Activated T-helper 1 cell treated with anti-CD3 and anti-CD28 coated beads, Interleukin-12 subunit alpha, Interleukin-12 subunit beta, Interleukin-2, Interleukin-4 antibody, amounts not matched to agents 30 ng/mL and 10 ng/mL and 1 ng/mL, durations not matched to agents 14 hours and 24 hours and 36 hours (primary cell): ENCODE measurements at regions of chr12 and their contacts with region 1.

Region 1: DNA sequence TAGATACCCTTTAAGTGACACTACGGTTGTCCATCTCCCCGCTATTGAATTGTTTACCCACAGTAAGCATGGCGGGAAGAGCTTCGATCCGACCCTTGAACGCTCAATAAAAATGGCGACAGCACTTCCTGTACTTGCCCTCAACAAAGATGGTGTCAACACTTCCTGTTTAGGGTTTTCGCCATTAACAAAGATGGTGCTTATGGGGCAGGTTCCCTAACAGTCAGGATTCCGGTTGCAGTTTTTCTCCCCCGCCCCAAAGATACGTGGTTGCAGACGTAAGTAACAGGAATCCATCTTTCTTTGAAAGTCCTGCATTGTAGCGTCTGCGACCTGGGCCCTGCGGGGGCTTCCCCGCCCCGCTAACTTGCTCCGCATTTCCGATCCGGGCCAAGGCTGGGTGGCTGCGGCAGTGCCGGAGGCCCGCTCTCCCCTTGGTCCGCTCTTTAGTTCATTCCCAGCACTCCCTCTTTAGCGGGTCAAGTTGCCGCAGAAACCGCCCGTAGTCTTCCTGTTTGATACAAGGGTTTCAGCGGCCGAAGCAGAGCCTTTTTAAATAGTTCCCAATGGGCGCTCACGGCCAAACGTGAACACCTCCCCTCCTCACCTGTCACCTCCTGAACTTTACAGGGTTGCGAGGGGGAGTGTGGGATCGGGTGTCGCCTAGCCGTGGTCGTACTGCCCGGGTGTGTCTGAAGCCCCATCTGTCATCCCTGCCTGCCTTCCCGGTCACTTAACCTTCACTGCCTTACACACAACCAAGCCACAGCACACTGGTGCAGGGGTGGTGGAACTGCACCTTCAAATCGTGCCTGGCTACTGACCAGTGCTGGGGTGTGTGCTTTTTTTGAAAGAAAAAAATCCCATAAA is at the start of gene CRADD:
- DNase-seq: peak; percentile 86
- H3K4me3 Mint-ChIP-seq: peak within 1 kb of the TSS; percentile 85
- H3K27ac Mint-ChIP-seq: peak within 1 kb of the TSS; percentile 96
- H3K4me1 Mint-ChIP-seq: peaks cover 38% of the 10 kb centered on the region
- H3K27me3 Mint-ChIP-seq: no peaks in the 10 kb centered on the region
- total RNA-seq, gene CRADD: 11.2 and 12.3 TPM in 2 replicates

Region 2: GRCh38 chr12:91866566-91866965 is 1810.9 kb before region 1 on chr12:
- intact Hi-C with region 1: loop called (anchors 5 kb)
- DNase-seq: no peak
- H3K4me3 Mint-ChIP-seq: no peak overlapping the region
- H3K27ac Mint-ChIP-seq: no peak overlapping the region
- H3K4me1 Mint-ChIP-seq: peaks cover 16% of the 10 kb centered on the region
- H3K27me3 Mint-ChIP-seq: no peaks in the 10 kb centered on the region

Region 3: GRCh38 chr12:93336291-93336741 is 341.1 kb before region 1 on chr12:
- intact Hi-C with region 1: no loop called
- DNase-seq: no peak
- H3K4me3 Mint-ChIP-seq: no peak overlapping the region
- H3K27ac Mint-ChIP-seq: no peak overlapping the region
- H3K4me1 Mint-ChIP-seq: no peaks in the 10 kb centered on the region
- H3K27me3 Mint-ChIP-seq: peaks cover 1% of the 10 kb centered on the region

Region 4: DNA sequence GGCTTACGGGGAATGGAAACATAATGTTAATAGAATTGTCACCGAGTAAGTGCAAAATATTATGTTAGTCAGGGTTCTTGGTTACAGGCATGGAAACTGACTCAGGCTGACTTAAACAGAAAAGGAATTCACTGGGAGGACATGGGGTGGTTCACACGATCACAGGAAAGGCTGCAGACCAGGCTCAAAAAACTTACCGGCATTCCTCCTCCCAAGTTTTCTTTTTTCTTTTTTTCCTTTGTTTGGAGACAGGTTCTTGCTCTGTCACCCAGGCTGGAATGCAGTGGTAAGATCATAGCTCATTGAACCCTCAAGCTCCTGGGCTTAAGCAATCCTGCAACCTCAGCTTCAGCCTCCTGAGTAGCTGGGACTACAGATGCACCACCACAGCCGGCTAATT is 223.8 kb before region 1 on chr12:
- intact Hi-C with region 1: no loop called
- DNase-seq: no peak
- H3K4me3 Mint-ChIP-seq: no peak overlapping the region
- H3K27ac Mint-ChIP-seq: no peak overlapping the region
- H3K4me1 Mint-ChIP-seq: peaks cover 10% of the 10 kb centered on the region
- H3K27me3 Mint-ChIP-seq: peaks cover 13% of the 10 kb centered on the region

Region 5: GRCh38 chr12:93467351-93468007 is 210.0 kb before region 1 on chr12 and contains the start of gene MRPL42:
- intact Hi-C with region 1: loop called (anchors 1 kb)
- DNase-seq: peak; percentile 90
- H3K4me3 Mint-ChIP-seq: peak within 1 kb of the TSS; percentile 96
- H3K27ac Mint-ChIP-seq: peak within 1 kb of the TSS; percentile 93
- H3K4me1 Mint-ChIP-seq: peaks cover 43% of the 10 kb centered on the region
- H3K27me3 Mint-ChIP-seq: no peaks in the 10 kb centered on the region
- total RNA-seq, gene MRPL42: 83.2 and 87.0 TPM in 2 replicates

Region 6: DNA sequence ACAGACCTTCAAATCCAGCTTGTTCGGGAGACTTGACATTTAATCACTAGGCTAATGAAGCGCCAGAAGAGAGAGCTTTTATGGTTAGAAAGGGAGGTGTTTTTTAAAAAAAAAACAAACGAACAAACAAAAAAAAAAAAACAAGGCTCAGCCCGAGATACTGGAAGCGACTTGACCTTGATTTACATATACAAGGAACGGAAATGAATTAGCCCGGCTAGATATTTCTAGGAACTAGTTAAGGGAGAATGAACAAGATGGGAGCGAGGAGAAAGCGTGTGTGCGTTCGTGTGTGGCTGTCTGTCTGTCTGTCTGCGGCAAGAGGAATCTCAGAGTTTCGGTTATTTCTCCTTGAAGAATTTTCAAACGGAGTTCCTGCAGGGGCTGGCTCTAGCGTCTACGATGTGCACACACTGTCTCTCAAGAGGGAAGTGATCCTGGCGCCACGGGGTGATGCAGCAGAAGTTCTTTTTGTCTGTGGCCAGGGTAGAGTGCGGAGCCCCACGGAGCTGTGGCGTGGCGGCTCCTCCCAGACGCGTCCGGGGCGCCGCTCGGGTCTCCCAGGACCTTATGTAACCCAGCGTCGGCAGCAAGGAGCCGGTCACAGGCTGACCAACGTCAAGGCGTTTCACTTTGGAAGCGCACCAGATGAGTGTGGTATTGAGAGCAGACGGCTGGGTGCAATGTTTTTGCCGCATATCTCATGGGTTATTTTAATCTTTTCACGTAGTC is 86.1 kb before region 1 on chr12:
- intact Hi-C with region 1: loop called (anchors 1 kb)
- DNase-seq: no peak
- H3K4me3 Mint-ChIP-seq: peak overlapping the region; percentile 96
- H3K27ac Mint-ChIP-seq: peak overlapping the region; percentile 74
- H3K4me1 Mint-ChIP-seq: peaks cover 55% of the 10 kb centered on the region
- H3K27me3 Mint-ChIP-seq: peaks cover 34% of the 10 kb centered on the region

Region 7: DNA sequence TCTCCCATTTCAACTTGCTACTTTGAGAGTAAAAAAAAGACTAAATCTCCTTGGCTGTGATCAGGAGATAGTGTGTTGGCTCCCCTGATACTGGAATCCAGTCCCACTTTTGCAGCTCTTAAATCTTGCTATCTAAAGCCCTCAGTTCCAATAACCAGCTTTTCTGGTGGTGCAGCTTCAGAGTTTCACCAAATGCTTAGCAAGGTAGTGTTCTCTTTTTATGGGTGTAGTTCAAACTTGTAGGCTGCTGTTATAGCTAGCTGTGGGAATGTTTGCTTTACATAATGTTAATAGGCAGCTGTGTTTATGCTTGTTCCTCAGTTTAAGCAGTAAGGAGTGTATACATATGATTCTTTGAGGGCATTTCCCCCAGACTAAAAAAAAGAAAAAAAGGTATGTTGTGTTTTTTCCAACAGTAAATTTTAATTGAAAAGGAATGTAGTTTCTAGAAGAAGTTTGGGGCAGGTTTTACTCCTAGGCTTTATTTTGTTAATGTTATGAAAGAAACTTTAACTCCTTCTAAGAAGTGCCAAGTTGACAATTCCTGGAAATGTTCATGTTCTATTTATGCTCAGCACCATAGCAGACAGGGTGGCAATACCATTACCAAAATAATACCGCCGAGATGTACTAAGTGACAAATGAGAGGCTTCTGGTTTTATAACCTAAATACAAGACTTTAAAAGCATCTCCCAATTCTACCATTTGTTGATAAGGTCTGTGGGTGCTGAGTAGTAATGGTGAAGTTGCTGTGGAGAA is 11.8 kb after region 1 on chr12:
- intact Hi-C with region 1: no loop called
- DNase-seq: no peak
- H3K4me3 Mint-ChIP-seq: no peak overlapping the region
- H3K27ac Mint-ChIP-seq: no peak overlapping the region
- H3K4me1 Mint-ChIP-seq: peaks cover 26% of the 10 kb centered on the region
- H3K27me3 Mint-ChIP-seq: peaks cover 2% of the 10 kb centered on the region

Region 8: DNA sequence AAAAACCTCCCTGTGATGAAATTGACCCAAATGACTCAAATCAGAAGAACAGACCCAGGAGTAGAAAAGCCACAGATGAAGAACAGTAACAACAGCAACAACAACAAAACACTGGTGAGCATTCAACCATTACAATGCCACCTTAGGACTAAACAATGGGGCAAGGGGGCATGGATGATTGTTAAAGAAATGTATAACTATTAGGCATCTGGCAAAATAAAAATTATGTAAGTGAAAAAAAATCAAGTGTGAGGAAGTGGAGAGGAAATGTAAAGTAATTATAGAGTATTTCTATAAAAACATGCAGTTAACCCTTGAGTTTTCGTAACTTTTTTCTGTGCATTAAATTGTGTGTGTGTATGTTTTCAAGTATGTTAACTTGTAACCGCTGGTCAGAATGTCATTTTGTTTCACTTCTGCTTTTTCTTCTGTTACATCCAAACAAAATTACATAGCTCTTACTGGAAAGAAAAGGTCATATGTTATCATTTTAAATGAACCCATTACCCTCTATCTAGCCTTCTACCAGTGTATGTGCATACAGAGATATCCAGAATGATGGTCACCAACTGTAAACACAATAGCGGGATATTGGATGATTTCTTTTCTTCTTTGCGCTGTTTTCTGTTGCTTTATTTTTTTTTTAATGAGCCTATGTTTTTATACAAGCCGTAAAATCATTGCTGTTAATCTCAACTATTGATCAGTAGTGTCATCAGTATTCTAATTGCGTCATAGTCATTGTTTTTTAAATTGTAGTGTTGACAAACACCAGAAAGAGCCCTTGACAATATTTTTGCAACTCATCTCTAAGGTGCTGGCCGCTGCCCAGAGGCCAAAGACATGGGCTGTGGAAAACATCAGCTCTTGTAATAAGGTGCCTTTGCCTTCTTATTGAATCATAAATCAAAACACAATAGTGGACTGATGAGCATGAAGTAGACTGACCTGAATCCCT is 170.4 kb after region 1 on chr12:
- intact Hi-C with region 1: loop called (anchors 5 kb)
- DNase-seq: peak; percentile 33
- H3K4me3 Mint-ChIP-seq: peak overlapping the region; percentile 49
- H3K27ac Mint-ChIP-seq: peak overlapping the region; percentile 86
- H3K4me1 Mint-ChIP-seq: peaks cover 74% of the 10 kb centered on the region
- H3K27me3 Mint-ChIP-seq: no peaks in the 10 kb centered on the region

Region 9: DNA sequence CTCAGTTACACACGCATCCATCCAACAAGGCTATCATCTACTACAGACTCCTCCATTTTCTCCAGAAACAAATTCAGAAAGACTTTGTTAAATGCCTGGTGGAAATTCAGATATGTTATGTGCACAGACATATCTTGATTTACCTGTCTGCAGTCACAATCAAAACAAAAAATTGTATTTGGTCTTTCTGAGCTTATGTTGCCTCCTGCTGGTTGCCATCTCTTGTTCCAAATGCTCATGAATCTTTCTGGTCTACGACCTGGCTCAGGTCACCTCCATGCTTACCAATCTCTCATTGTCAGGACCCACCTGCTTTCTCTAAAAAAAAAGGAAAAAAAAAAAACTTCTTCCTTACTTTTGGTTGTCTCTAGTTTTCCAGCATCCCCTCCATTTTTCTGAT is 301.8 kb after region 1 on chr12:
- intact Hi-C with region 1: loop called (anchors 2 kb)
- DNase-seq: peak; percentile 15
- H3K4me3 Mint-ChIP-seq: no peak overlapping the region
- H3K27ac Mint-ChIP-seq: no peak overlapping the region
- H3K4me1 Mint-ChIP-seq: peaks cover 42% of the 10 kb centered on the region
- H3K27me3 Mint-ChIP-seq: peaks cover 10% of the 10 kb centered on the region